RWPE1 (cell line): ENCODE measurements at regions of chr4 and their contacts with region 1.

Region 1: GRCh38 chr4:134024251-134024650 is 177.3 kb downstream of the PABPC4L start:
- DNase-seq: no peak
- H3K27ac ChIP-seq: no peak overlapping the region
- CTCF ChIP-seq: peak; percentile 20; the same call in 1 of the 2 replicates

Region 2: DNA sequence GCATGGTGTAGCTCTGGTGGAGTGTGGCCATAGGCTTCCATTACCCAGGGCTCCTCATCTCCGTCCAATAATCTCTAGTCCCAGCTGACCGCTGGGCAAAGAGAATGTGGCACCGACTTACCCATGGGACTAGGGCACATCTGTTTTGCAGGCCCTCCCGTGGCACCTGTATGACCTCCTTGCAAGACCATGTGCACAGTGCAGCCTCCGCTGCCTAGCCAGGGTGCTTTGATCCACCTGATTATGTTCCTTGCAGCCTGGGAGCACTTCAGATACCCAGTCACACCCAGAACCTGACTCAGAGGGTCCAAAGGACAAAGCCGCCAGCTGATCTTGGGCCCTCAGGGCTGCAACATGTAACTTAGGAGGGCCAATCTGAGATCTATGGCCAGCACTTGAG is 790.3 kb before region 1 on chr4:
- CTCF ChIA-PET with region 1: no interaction called
- POLR2A ChIA-PET with region 1: interaction called, 10 read pairs
- DNase-seq: no peak
- H3K27ac ChIP-seq: no peak overlapping the region
- CTCF ChIP-seq: no peak